ENCODE measurements at regions of chr16 and their contacts with region 1.

Region 1: DNA sequence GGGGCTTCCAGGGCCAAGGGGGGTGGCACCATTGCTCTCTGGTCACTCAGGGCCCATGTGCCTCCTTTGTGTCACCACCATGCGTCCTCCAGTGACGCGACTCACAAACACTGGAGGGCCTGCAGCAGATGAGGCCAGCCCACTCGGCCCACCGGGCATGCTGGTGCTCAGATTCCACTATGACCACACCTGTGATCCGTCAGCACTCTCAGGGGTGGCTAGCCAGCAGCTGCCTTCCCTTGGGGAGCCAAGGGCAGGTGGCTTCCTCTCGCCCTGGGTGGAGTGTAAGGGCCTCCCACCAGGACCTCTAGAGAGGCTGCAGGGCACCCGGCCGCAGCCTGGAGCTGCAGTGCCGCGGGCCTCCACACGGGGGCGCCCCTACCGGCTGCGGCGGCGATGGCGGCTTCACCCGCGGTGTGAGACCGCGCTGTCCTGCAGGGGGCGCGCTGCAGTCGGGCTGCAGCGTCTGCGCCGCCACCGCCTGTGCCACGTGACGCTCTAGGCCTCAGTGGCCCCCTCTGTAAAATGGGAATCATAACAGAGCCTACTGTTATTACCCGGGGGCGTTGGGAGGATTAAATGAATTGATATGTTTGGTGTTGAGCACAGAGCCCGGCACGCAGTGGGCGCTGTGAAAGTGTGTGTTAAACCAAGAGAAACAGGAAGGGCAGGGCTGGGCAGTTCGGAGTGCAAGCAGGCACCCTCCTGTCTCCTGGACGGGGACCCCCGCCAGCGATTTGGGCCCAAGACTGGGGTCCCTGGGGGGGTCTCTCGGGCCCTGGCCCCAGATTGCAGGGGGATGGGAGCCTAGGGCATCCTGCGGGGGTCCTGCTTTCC is 192.4 kb upstream of the GSE1 start:
- DNase-seq: peak; percentile 73
- ATAC-seq: peak; percentile 27
- H3K4me3 Mint-ChIP-seq: no peak overlapping the region
- H3K27ac Mint-ChIP-seq: no peak overlapping the region
- H3K4me1 Mint-ChIP-seq: peaks cover 26% of the 10 kb centered on the region
- H3K27me3 Mint-ChIP-seq: no peaks in the 10 kb centered on the region
- CTCF ChIP-seq: peak; percentile 100

Region 2: DNA sequence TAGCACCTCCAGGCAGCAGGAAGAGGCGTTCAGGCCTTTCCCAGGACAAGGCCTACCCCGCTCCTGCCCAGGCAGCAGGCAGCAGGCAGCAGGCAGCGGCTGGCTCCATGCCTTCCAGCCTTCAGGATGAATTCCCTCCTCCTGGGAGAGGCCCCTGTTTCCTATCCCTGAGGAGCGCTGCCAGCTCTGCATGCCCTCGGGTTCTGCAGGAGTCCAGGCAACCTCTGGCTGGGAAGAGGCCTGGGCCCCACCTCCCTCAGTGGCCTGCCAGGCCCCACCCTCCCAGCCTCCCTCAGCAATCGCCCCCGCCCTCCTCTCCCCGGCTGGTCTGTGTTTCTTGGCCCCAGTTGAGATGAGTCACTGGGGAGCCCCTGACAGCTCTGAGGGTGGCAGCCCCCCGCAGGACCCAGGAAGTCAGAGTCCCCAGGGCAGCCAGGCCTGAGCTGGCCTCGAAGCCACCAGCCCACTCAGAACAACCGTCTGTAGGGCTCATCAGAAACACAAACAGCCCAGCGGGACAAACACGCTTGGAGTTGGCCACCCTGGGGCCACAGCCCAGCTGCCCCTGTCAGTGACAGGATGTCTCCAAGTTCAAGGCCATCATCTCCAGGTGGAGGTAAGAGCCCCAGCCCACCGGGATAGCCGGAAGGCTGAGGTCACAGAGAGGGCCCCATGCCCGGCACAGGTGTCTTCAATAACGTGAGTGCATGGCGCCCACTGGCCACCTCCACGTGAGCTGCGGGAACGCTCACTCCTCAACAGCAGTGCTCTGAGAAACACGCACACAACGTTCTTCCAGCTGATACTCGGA is 268.9 kb before region 1 on chr16:
- CTCF ChIA-PET with region 1: no interaction called
- POLR2A ChIA-PET with region 1: no interaction called
- DNase-seq: no peak
- ATAC-seq: peak; percentile 38
- H3K4me3 Mint-ChIP-seq: no peak overlapping the region
- H3K27ac Mint-ChIP-seq: peak overlapping the region; percentile 58
- H3K4me1 Mint-ChIP-seq: peaks cover 7% of the 10 kb centered on the region; the same call in 1 of the 2 replicates
- H3K27me3 Mint-ChIP-seq: no peaks in the 10 kb centered on the region; the same call in 1 of the 2 replicates
- CTCF ChIP-seq: no peak

Region 3: GRCh38 chr16:85330694-85331188 is 90.0 kb before region 1 on chr16:
- CTCF ChIA-PET with region 1: interaction called, 15 read pairs
- POLR2A ChIA-PET with region 1: no interaction called
- DNase-seq: no peak
- ATAC-seq: peak; percentile 32
- H3K4me3 Mint-ChIP-seq: peak overlapping the region; percentile 53
- H3K27ac Mint-ChIP-seq: peak overlapping the region; percentile 47; the same call in 1 of the 2 replicates
- H3K4me1 Mint-ChIP-seq: peaks cover 73% of the 10 kb centered on the region
- H3K27me3 Mint-ChIP-seq: peaks cover 52% of the 10 kb centered on the region
- CTCF ChIP-seq: no peak

Region 4: DNA sequence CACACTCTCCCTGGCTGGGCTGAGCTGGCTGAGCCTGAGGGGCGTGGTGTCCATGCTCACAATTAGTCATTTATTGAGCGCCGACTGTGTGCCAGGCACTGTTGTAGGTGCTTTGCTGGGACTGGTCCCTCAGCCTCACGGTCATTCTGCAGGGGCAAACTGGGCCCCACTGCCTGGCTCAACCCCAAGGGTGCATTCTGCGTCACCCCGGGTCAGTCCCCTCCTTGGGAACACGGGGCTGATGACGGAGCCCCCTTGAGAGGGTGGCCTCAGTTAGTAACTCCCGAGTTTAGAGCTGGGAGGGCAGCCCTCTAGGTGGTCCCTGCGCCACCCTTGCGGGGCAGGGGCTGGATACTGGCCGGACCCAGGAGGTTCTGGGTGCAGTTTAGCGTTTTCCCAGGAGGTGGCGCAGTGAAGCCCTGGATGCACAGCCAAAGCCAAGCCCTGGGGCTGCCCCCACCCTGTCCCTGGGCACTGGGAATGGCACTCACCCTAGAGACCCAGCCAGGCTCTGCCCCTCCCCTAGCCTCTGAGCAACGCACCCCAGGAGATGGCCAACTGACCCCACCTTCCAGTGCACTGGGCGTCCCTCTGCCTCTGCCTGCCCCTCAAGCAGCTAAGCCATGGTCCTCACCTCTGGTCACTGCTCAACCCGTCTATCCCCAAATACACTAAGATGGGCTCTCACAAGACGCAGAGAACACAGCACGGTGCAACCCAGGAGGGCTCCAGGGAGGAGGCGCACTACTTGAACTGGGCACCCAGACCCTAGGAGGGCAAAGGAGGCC is 50.8 kb before region 1 on chr16:
- CTCF ChIA-PET with region 1: interaction called, 18 read pairs
- POLR2A ChIA-PET with region 1: no interaction called
- DNase-seq: peak; percentile 84
- ATAC-seq: peak; percentile 73
- H3K4me3 Mint-ChIP-seq: no peak overlapping the region
- H3K27ac Mint-ChIP-seq: no peak overlapping the region
- H3K4me1 Mint-ChIP-seq: peaks cover 21% of the 10 kb centered on the region
- H3K27me3 Mint-ChIP-seq: peaks cover 9% of the 10 kb centered on the region
- CTCF ChIP-seq: peak; percentile 85

Region 5: DNA sequence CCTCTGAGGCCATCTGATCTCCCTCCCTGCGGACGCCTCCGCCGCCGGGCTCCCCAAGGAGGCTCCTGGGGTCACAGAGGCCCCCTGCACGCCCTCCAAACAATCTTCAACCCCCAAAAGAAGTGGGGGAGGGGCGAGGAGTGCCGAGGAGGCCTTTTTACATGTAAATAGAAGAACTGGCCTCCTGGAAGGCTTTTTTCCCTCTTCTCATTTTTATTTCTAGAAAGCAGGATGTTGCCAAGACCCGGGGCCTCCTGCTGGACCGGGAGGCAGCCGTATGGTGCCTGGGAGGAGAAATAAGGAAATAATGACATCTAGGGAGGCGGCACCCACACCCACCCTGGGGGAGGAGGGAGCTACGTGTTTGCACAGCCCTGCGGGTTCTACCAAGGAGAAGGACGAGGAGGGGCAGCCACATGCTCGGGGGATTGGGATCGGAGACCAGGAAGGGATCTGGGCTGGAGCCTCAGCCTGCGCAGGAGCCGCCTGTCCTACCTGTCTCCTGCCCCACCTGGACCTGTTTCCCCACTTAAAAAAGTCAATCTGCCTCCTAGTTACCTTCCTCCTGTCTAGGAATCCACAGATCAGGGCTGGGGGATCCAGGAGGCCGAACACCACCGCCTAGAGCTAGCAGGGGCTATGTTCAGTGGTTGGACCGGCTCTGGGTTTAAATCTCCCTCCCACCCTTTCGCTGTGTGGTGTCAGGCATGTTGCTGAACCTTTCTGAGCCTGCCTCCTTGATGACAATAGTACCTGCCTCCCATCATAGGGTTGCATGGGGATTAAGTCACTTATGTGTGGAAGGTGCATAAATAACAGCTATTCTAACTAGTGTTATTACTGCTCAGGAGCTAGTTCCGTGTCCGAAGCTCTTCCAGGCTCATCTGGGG is 16.7 kb after region 1 on chr16:
- CTCF ChIA-PET with region 1: interaction called, 53 read pairs
- POLR2A ChIA-PET with region 1: no interaction called
- DNase-seq: no peak
- ATAC-seq: peak; percentile 21
- H3K4me3 Mint-ChIP-seq: peak overlapping the region; percentile 50
- H3K27ac Mint-ChIP-seq: peak overlapping the region; percentile 51; the same call in 1 of the 2 replicates
- H3K4me1 Mint-ChIP-seq: peaks cover 39% of the 10 kb centered on the region
- H3K27me3 Mint-ChIP-seq: no peaks in the 10 kb centered on the region
- CTCF ChIP-seq: no peak

Region 6: DNA sequence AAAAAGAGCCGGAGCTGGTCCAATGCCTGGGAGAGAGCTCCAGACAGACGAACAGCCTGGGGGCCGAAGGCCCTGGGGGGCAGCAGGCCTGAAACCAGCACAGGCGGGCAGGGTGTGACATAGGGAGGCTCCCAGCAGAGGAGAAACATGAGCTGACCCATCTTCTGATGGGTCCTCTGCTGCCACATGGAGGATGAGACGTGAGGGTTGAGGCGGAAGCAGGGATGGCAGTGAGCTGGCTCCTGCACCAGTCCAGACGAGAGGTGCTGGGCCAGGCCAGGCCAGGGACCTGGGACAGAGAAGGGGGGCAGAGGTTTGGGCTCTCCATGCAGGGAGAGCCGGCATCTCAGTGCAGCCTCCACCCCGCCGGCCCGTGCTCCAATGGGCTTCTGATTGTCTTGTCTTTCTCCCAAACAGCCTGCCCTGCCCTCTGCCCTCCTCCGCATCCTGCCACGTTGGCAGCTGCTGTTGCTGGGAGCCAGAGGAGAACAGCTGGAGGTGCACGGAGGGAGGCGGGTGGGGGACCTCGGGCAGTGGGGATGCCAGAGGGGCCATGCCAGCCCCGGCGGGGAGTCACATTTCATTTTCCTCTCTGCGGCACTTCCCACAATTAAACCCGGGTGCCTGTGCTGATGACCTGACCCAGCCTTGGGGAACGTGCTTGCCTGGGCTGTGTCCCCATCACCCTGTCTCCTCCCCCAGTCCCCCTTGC is 53.3 kb after region 1 on chr16:
- CTCF ChIA-PET with region 1: interaction called, 15 read pairs
- POLR2A ChIA-PET with region 1: no interaction called
- DNase-seq: no peak
- ATAC-seq: peak; percentile 52
- H3K4me3 Mint-ChIP-seq: no peak overlapping the region
- H3K27ac Mint-ChIP-seq: 0 out of 2 replicates have a peak overlapping the region, but pooled peaks have one; percentile 20
- H3K4me1 Mint-ChIP-seq: peaks cover 25% of the 10 kb centered on the region
- H3K27me3 Mint-ChIP-seq: 0 out of 2 replicates have a peak, but pooled peaks cover 2% of the 10 kb centered on the region
- CTCF ChIP-seq: no peak

Region 7: DNA sequence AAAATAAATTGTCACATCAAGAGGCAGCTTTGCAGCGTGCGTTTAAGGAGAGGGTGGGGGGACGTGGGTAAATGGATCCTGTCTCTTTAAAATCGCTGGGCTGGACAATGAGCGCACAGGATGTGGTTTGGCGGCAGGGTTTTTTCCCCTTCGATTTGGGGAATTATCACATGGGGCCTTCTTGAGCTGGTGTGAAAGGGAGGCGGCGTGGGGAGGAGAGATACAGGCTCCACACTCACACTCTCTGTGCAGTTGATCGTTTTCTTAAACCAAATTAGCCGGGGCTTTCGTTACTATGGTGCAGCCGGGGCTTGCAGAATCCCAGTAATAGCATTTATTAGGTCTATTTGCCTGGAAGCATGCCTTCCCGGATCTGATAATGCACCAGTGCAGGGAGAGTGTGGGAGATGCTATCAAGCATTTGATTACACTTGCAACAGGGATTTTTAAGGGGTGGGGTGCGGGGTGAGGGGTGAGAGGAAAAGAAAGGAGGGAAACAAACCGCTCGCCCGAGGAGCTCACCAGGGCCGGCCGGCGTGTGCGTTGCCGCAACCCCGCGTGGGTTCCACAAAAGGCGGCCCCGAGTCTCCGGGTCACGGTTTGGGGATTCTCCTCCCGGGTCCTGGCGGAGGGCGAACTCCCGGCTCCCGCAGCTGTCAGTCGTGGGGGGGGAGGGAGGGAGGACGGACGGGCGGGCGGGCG is 133.5 kb after region 1 on chr16:
- CTCF ChIA-PET with region 1: interaction called, 15 read pairs
- POLR2A ChIA-PET with region 1: no interaction called
- DNase-seq: no peak
- ATAC-seq: peak; percentile 4; the same call in 1 of the 2 replicates
- H3K4me3 Mint-ChIP-seq: peak overlapping the region; percentile 89
- H3K27ac Mint-ChIP-seq: peak overlapping the region; percentile 85
- H3K4me1 Mint-ChIP-seq: peaks cover 44% of the 10 kb centered on the region
- H3K27me3 Mint-ChIP-seq: peaks cover 8% of the 10 kb centered on the region
- CTCF ChIP-seq: no peak